Left lung (tissue), 14 donors: ENCODE measurements at regions of chr22 and their contacts with region 1.

Region 1: GRCh38 chr22:31970490-31971444 is 26.4 kb downstream of the YWHAH start:
- DNase-seq: peak; percentile 62 to 97 (median 84)
- ATAC-seq: peak; percentile 99
- H3K4me3 ChIP-seq: peak overlapping the region; percentile 28 to 39
- H3K27ac ChIP-seq: no peak overlapping the region
- H3K4me1 ChIP-seq: peaks cover 6 to 13% of the 10 kb centered on the region in 2 donors
- H3K27me3 ChIP-seq: no peaks in the 10 kb centered on the region
- CTCF ChIP-seq: peak; percentile 88 to 93

Region 2: DNA sequence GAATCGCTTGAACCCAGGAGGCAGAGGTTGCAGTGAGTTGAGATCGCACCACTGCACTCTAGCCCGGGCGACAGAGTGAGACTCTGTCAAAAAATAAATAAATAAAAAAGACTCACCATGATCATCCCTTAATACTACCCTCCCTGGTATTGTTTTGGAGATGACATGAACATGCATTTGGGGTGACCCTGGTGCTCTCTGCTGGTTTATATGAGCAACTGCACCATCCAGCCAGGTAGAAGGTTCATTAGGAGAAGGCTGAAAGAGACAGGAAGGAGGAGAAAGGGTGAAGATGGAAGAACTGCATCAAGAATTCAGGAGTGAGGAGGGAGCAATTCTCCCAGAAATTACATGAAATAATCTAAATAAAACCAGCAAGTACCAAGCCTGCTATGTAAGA is 110.1 kb after region 1 on chr22:
- intact Hi-C with region 1: loop called in 1 of 2 experiments (anchors 10 kb)
- DNase-seq: peak in 1 of 4 donors; percentile 18
- ATAC-seq: peak; percentile 84
- H3K4me3 ChIP-seq: no peak overlapping the region
- H3K27ac ChIP-seq: no peak overlapping the region
- H3K4me1 ChIP-seq: no peaks in the 10 kb centered on the region
- H3K27me3 ChIP-seq: peaks cover 0 to 15% of the 10 kb centered on the region in 2 donors
- CTCF ChIP-seq: peak; percentile 37 to 48